Activated CD4-positive, alpha-beta memory T cell treated with anti-CD3 and anti-CD28 coated beads for 36 hours (primary cell): ENCODE measurements at regions of chr6 and their contacts with region 1.

Region 1: GRCh38 chr6:16690608-16691198 is 70.6 kb downstream of the ATXN1 start:
- DNase-seq: peak; percentile 82
- H3K4me3 Mint-ChIP-seq: peak overlapping the region; percentile 51
- H3K27ac Mint-ChIP-seq: peak overlapping the region; percentile 90
- H3K4me1 Mint-ChIP-seq: peaks cover 93% of the 10 kb centered on the region
- H3K27me3 Mint-ChIP-seq: no peaks in the 10 kb centered on the region

Region 2: DNA sequence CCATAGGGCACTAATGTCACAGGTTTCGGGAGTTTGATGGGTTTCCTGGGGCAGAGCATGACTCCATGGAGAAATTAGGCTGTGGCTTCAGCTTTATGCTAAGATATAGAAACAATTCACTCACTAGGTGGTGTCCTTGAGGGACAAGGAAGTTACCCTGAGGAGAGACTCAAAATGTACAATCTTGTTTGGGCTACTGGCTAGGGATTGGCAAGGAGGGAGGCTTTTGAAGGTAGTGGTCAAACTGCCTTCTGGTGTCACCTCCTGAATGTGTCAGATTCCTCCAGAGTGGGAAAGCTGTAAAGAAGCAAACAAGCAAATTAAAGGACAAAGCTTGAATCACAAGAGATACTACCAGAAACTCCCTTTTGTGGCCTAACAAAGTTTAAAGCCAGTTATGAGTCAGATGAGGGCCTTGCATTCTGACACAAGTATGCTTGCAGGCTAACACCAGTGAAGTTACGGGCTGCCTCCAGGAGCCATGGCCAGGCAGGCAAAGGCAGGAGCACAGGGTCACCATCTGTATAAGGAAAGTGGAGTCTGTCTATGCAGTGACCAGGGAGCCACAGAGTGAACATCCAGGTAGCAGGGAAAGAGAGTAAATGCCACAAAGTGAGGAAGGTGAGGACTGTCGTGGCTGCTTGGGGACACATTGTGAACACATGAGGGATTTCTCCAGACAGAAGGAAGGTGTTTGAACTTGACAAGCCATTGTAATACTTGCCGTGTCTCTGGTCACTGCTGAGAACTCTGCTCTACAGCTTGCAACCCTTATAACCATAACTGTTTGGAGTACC is 920.2 kb before region 1 on chr6:
- CTCF ChIA-PET with region 1: no interaction called
- POLR2A ChIA-PET with region 1: no interaction called
- intact Hi-C with region 1: loop called (anchors 10 kb)
- DNase-seq: peak; percentile 55
- H3K4me3 Mint-ChIP-seq: no peak overlapping the region
- H3K27ac Mint-ChIP-seq: peak overlapping the region; percentile 71
- H3K4me1 Mint-ChIP-seq: peaks cover 42% of the 10 kb centered on the region
- H3K27me3 Mint-ChIP-seq: peaks cover 6% of the 10 kb centered on the region

Region 3: DNA sequence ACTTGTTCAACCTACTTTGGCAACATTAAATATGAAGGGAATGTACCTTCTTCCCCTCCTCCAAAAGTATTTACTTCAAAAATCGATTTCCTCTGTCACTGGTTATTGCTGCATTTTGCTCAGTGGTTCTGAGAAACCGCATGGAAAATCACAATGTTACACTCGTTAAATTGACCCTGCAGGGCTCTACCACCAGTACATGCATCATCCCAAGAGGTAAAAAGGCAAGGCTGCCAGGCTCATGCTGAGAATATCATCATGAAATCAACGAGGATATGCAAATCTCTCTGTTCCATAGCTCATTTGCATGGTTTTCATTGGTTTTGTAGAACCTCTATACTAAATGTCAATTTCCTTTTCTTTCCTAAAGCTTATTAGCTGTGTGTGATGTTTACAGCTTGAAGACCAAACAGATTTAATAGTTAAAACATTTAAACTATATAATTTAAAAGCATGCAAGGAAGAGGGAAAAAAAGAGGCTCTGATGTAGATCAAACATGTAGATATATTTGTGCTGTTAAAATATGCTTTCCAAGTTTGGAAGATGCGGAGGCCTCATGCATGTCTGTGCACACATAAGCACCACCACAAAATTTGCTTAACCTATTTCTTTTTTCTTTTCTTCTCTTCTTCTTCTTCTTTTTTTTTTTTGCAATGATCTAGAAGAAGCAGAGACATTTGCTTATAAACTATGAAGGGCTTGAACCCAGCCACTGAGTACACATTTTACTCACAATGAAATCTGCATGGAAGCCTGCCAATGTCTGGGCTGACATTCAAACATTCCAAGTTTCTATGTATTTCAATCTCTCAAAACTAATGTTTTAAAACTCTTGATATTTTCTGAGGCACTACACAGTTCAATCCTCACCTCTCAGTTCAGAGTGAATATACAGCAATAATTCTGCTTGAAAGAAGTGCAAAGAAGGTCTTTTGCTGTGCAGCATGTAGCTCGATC is 258.3 kb before region 1 on chr6:
- CTCF ChIA-PET with region 1: no interaction called
- POLR2A ChIA-PET with region 1: interaction called, 3 read pairs
- intact Hi-C with region 1: loop called (anchors 2 kb)
- DNase-seq: peak; percentile 58
- H3K4me3 Mint-ChIP-seq: no peak overlapping the region
- H3K27ac Mint-ChIP-seq: peak overlapping the region; percentile 100
- H3K4me1 Mint-ChIP-seq: peaks cover 66% of the 10 kb centered on the region
- H3K27me3 Mint-ChIP-seq: no peaks in the 10 kb centered on the region

Region 4: DNA sequence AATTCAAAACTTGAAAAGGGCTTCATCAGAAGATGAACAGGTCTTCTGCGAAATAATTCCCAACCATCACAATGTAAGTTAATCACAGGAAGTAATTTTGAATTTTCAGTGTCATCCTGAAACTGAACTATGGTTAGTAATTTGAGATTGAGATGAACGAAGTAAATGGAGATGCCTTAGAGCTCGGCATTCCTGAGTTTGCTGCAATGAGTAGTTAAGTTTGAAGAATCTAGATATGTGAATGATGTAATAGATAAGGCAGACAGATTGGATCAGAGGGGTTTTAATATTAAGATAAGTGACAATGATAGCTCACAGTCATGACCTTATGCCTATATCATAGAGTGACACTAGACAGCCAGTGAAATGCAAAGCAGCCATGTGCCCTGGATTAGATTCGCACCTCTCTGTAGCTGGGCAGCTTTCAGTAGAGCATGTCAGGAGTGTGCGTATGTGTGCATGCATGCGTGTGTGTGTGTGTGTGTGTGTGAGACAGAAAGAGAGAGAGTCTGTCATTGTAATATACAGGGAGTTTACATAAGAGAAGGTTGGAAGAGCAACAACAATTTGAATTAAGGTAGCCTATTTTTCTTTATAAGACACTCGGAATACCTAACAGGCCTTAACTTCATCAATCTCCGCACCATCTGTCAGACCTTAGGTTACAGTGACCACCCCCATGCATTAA is 219.3 kb before region 1 on chr6:
- CTCF ChIA-PET with region 1: interaction called, 3 read pairs
- POLR2A ChIA-PET with region 1: interaction called, 5 read pairs
- intact Hi-C with region 1: loop called (anchors 2 kb)
- DNase-seq: no peak
- H3K4me3 Mint-ChIP-seq: no peak overlapping the region
- H3K27ac Mint-ChIP-seq: peak overlapping the region; percentile 69
- H3K4me1 Mint-ChIP-seq: peaks cover 88% of the 10 kb centered on the region
- H3K27me3 Mint-ChIP-seq: no peaks in the 10 kb centered on the region

Region 5: GRCh38 chr6:16704401-16705045 is 13.8 kb after region 1 on chr6:
- CTCF ChIA-PET with region 1: interaction called, 38 read pairs
- POLR2A ChIA-PET with region 1: interaction called, 43 read pairs
- intact Hi-C with region 1: loop called (anchors 1 kb)
- DNase-seq: peak; percentile 86
- H3K4me3 Mint-ChIP-seq: peak overlapping the region; percentile 87
- H3K27ac Mint-ChIP-seq: peak overlapping the region; percentile 87
- H3K4me1 Mint-ChIP-seq: peaks cover 69% of the 10 kb centered on the region
- H3K27me3 Mint-ChIP-seq: no peaks in the 10 kb centered on the region

Region 6: DNA sequence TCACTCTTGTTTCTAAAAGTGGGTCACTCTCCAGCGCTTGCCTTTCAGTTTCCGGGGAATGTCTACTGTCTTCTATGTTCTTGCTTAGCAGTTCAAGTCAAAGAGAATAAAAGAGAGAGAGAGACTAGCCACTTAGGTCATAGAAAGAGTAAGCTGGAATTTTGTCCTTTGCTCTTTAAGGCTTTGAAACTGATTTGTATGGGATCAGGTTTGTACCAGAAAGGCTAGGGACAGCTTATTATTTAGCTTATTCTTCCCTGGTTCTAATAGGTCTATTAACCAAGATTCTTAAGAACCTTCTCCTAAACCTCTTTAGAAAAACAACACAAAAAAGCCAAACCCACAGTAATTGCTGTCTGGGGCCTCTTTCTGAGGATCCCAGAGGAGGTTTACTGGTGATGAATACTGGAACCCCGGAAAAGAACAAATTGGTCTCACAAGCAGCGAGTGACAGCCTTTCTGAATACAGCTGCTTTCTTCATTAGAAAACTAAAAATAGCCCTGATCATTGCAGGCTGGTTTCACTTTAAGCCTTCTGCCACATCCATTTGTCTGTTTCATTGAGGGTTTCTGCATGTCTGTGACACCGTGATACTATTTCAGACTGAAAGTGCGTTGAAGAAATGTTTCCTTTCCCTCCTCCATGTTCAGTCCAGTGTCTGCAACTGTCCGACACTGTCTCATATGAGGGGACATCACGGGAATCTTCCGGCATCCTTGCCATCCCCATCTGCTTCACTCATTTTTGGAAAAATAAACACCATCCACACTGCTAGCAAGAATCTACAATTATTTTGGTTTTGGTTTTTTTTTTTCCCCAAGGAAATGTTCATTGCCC is 145.7 kb after region 1 on chr6:
- CTCF ChIA-PET with region 1: no interaction called
- POLR2A ChIA-PET with region 1: no interaction called
- intact Hi-C with region 1: no loop called
- DNase-seq: peak; percentile 25
- H3K4me3 Mint-ChIP-seq: peak overlapping the region; percentile 66
- H3K27ac Mint-ChIP-seq: peak overlapping the region; percentile 83
- H3K4me1 Mint-ChIP-seq: peaks cover 38% of the 10 kb centered on the region
- H3K27me3 Mint-ChIP-seq: peaks cover 4% of the 10 kb centered on the region